MCF 10A (cell line): ENCODE measurements at regions of chr13 and their contacts with region 1.

Region 1: DNA sequence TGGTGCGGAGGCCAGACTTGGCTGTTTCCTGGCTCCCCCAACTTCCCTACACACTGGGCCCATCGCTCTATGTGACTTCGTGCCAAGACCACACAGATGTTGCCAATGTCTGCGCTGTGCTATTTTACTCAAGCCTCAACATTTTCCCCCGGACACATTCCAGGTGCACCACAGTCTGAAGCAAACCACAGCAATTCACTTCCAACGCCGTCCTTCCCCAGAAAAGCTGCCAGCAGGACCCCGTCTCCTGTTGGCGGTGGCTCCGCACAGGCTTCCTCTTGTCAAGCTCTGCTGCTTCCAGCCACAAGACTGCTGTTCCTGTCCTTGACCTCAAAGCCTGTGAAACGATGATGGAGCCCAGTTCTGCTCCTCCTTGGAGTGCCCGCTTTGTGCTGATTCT is 100.7 kb downstream of the CRYL1 start:
- DNase-seq: no peak
- H3K4me3 Mint-ChIP-seq: no peak overlapping the region
- H3K27ac Mint-ChIP-seq: no peak overlapping the region
- H3K4me1 Mint-ChIP-seq: peaks cover 20% of the 10 kb centered on the region
- H3K27me3 Mint-ChIP-seq: no peaks in the 10 kb centered on the region
- CTCF ChIP-seq: no peak

Region 2: DNA sequence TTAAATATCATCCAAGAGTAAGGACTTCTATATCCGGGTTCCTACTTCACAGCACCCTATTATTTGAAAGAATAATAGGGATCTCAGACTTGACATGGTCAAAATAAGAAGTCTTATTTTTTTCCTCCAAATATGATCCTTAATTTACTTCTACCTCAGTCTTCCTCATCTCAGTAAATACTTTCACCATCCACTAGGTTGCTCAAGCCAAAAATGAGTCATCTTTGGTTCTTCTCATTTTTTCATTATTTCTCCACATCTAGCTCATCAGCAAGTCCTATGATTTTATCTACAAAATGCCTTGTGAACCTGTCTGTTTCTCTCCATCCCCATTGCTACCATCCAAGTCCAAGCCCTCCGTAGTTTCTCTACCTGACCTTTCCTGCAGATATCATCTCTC is 71.0 kb before region 1 on chr13:
- CTCF ChIA-PET with region 1: no interaction called
- POLR2A ChIA-PET with region 1: interaction called, 11 read pairs
- intact Hi-C with region 1: no loop called
- DNase-seq: peak; percentile 72
- H3K4me3 Mint-ChIP-seq: no peak overlapping the region
- H3K27ac Mint-ChIP-seq: no peak overlapping the region
- H3K4me1 Mint-ChIP-seq: peaks cover 44% of the 10 kb centered on the region
- H3K27me3 Mint-ChIP-seq: no peaks in the 10 kb centered on the region
- CTCF ChIP-seq: peak; percentile 28

Region 3: GRCh38 chr13:20369886-20370361 is 55.0 kb before region 1 on chr13:
- CTCF ChIA-PET with region 1: interaction called, 5 read pairs
- POLR2A ChIA-PET with region 1: interaction called, 15 read pairs
- intact Hi-C with region 1: no loop called
- DNase-seq: peak; percentile 33
- H3K4me3 Mint-ChIP-seq: no peak overlapping the region
- H3K27ac Mint-ChIP-seq: peak overlapping the region; percentile 47
- H3K4me1 Mint-ChIP-seq: peaks cover 18% of the 10 kb centered on the region
- H3K27me3 Mint-ChIP-seq: no peaks in the 10 kb centered on the region
- CTCF ChIP-seq: no peak

Region 4: DNA sequence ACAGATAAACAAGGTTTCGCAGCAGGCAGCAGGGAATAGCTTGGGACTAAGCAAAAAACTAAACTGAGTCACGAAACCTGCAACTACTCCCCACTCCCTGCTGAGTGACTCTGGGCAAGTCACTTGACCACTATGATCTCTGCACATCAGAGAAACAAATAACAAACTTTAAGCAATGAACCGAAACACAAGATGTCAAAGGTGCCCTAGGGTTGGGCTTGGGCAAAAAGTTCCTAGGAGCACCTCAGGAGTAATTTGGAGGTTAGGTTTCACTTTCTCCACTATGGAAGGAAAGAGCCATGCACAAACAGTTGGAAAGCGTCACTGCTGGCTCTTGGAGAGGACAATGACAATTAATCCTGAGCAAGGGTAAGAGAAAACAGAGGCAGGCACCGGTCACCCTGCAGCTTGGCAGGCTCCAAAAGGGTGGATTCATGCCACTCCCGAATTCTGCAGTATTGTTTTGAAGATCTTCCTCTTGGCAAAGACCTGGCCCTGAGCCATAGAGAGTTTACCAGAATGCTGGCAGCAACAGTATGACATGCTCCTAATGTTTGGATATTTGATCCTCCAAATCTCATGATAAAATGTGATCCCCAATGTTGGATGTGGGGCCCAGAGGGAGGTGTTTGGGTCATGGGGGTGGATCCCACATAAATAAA is 40.4 kb after region 1 on chr13:
- CTCF ChIA-PET with region 1: interaction called, 4 read pairs
- POLR2A ChIA-PET with region 1: interaction called, 3 read pairs
- intact Hi-C with region 1: loop called (anchors 5 kb)
- DNase-seq: peak; percentile 88
- H3K4me3 Mint-ChIP-seq: peak overlapping the region; percentile 62
- H3K27ac Mint-ChIP-seq: peak overlapping the region; percentile 36
- H3K4me1 Mint-ChIP-seq: peaks cover 32% of the 10 kb centered on the region
- H3K27me3 Mint-ChIP-seq: no peaks in the 10 kb centered on the region
- CTCF ChIP-seq: no peak

Region 5: DNA sequence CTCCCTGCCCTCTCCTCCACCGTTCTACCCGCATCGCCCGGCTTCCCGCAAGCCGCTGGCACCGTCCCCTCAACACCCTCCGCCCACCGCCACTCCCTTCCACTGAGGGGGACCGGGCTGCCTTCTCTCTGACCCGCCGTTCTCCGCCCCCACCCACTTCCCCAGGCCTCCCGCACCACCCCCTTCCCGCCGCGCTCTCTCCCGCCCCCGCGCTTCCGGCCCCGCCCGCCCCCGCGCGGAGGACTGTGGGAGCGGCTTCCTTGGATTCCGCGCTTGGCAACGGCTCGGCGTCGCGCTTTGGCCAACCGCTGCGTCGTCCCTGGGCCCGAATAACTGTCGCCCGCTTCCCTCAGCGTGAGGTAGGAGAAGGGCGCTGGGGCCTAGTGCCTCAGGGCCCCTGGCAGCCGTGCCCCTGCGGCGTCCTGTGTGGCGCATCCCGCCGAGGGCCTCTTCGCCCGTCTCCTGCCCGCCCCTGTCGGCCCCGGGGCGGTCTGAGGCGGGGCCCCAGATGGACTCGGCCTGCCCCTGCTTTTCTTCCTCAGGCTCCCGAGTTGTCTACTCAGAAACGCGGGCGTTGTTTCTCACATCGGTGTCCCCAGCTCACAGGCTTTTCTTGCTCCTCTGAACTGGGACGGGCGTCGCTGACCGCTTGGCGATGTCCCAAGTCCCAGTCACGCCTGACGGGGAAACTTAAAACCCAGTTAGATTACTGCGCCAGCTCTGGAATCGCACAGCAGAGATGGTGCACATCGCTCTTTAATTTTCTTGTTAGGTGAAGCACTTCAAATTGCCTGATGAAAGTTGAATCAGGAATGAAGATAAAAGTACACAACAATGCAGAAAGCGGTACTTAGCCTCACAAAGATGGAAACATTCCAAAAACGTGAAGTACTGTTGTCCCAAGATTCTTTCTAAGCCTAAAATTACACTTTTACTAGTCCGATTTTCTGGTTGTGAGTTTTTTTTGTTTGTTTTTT is 142.2 kb after region 1 on chr13 and contains the start of gene IFT88:
- CTCF ChIA-PET with region 1: no interaction called
- POLR2A ChIA-PET with region 1: interaction called, 11 read pairs
- intact Hi-C with region 1: no loop called
- DNase-seq: peak; percentile 86
- H3K4me3 Mint-ChIP-seq: peak within 1 kb of the TSS; percentile 95
- H3K27ac Mint-ChIP-seq: peak within 1 kb of the TSS; percentile 96
- H3K4me1 Mint-ChIP-seq: no peaks in the 10 kb centered on the region
- H3K27me3 Mint-ChIP-seq: no peaks in the 10 kb centered on the region
- CTCF ChIP-seq: no peak
- total RNA-seq, gene IFT88: 18.3 and 19.8 TPM in 2 replicates